A673 (cell line): ENCODE measurements at regions of chr7 and their contacts with region 1.

Region 1: GRCh38 chr7:100705753-100706671 is at the start of gene POP7:
- DNase-seq: peak; percentile 99
- H3K4me3 ChIP-seq: peak within 1 kb of the TSS; percentile 77
- H3K27ac ChIP-seq: peak within 1 kb of the TSS; percentile 95
- H3K4me1 ChIP-seq: peaks cover 6% of the 10 kb centered on the region
- H3K27me3 ChIP-seq: peaks cover 17% of the 10 kb centered on the region
- CTCF ChIP-seq: no peak
- total RNA-seq, gene POP7: 68.8 and 72.6 TPM in 2 replicates

Region 2: GRCh38 chr7:102312317-102312716 is 1606.3 kb after region 1 on chr7:
- CTCF ChIA-PET with region 1: interaction called, 10 read pairs
- POLR2A ChIA-PET with region 1: no interaction called
- intact Hi-C with region 1: no loop called
- DNase-seq: no peak
- H3K4me3 ChIP-seq: no peak overlapping the region
- H3K27ac ChIP-seq: no peak overlapping the region
- H3K4me1 ChIP-seq: no peaks in the 10 kb centered on the region
- H3K27me3 ChIP-seq: no peaks in the 10 kb centered on the region
- CTCF ChIP-seq: no peak